ENCODE measurements at regions of chr6 and their contacts with region 1.

Region 1: GRCh38 chr6:6676910-6677441 is 88.5 kb downstream of the LY86 start:
- DNase-seq: peak; percentile 85
- H3K4me3 ChIP-seq: no peak overlapping the region
- H3K27ac ChIP-seq: peak overlapping the region in 1 of 4 donors; percentile 15
- H3K4me1 ChIP-seq: peaks cover 0 to 5% (median 2%) of the 10 kb centered on the region in 4 donors
- H3K27me3 ChIP-seq: no peaks in the 10 kb centered on the region
- CTCF ChIP-seq: peak; percentile 83 to 94 (median 93)
- EP300 ChIP-seq: no peak
- POLR2A ChIP-seq: no peak

Region 2: GRCh38 chr6:6749702-6750491 is 72.9 kb after region 1 on chr6:
- intact Hi-C with region 1: loop called (anchors 2 kb)
- DNase-seq: peak; percentile 88
- H3K4me3 ChIP-seq: peak overlapping the region in 1 of 4 donors; percentile 22
- H3K27ac ChIP-seq: peak overlapping the region; percentile 69 to 80 (median 74)
- H3K4me1 ChIP-seq: peaks cover 0 to 45% (median 37%) of the 10 kb centered on the region in 4 donors
- H3K27me3 ChIP-seq: no peaks in the 10 kb centered on the region
- CTCF ChIP-seq: no peak
- EP300 ChIP-seq: no peak
- POLR2A ChIP-seq: no peak

Region 3: GRCh38 chr6:7615611-7616383 is 938.8 kb after region 1 on chr6:
- intact Hi-C with region 1: loop called (anchors 5 kb)
- DNase-seq: no peak
- H3K4me3 ChIP-seq: no peak overlapping the region
- H3K27ac ChIP-seq: no peak overlapping the region
- H3K4me1 ChIP-seq: peaks cover 0 to 10% (median 6%) of the 10 kb centered on the region in 4 donors
- H3K27me3 ChIP-seq: no peaks in the 10 kb centered on the region
- CTCF ChIP-seq: peak; percentile 24 to 66 (median 56)
- EP300 ChIP-seq: no peak
- POLR2A ChIP-seq: no peak